Heart left ventricle (tissue), 16 donors: ENCODE measurements at regions of chr6 and their contacts with region 1.

Region 1: GRCh38 chr6:44475779-44476434 is 88.4 kb downstream of the CDC5L start:
- DNase-seq: peak; percentile 72 to 89 (median 78)
- ATAC-seq: peak; percentile 73 to 88 (median 86)
- H3K4me3 ChIP-seq: peak overlapping the region in 2 of 12 donors; percentile 17 to 19
- H3K27ac ChIP-seq: peak overlapping the region in 1 of 12 donors; percentile 38
- H3K4me1 ChIP-seq: peaks cover 0 to 23% (median 9%) of the 10 kb centered on the region in 12 donors
- H3K27me3 ChIP-seq: no peaks in the 10 kb centered on the region
- CTCF ChIP-seq: peak; percentile 86 to 96 (median 93)
- POLR2A ChIP-seq: no peak

Region 2: DNA sequence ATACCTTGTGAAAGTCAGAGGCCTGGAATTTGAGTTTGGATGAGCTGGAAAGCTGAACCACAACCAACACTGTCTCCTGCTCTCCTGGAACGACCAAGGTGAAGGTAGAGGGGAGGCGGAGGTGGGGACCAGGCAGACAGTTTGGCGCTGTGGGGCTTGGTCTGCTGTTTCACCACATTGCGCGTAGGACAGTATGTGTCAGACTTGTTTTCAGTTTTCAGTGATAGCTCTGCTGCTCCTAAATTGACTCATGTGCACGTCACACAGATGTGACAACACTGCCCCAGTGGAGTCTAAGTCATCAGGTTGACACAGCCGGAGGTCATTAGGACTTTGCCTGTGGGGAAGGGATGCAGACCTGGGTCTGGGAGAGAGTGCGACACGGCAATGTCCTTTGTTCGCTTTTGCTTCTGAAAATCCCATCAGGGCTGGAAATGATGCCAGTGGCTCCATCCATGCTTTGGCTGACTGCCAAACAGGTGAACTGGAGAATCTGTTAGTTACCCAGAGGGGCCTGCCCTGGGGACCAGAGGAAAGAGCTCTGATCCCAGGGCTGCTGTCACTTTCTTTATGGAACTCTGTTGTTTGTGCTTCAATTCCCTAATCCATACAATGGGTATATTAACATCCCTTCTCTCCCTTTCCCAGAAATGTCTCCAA is 167.1 kb after region 1 on chr6:
- intact Hi-C with region 1: loop called in 8 of 10 experiments (anchors 5 to 10 kb)
- DNase-seq: no peak
- ATAC-seq: no peak
- H3K4me3 ChIP-seq: no peak overlapping the region
- H3K27ac ChIP-seq: no peak overlapping the region
- H3K4me1 ChIP-seq: no peaks in the 10 kb centered on the region
- H3K27me3 ChIP-seq: peaks cover 0 to 9% (median 0%) of the 10 kb centered on the region in 9 donors
- CTCF ChIP-seq: no peak
- POLR2A ChIP-seq: no peak

Region 3: GRCh38 chr6:45421709-45422502 is 946.0 kb after region 1 on chr6:
- intact Hi-C with region 1: loop called in 1 of 10 experiments (anchors 5 kb)
- DNase-seq: peak; percentile 50 to 81 (median 65)
- ATAC-seq: peak; percentile 39 to 77 (median 56)
- H3K4me3 ChIP-seq: peak overlapping the region; percentile 41 to 81 (median 70)
- H3K27ac ChIP-seq: peak overlapping the region in 7 of 12 donors; percentile 37 to 82 (median 54)
- H3K4me1 ChIP-seq: peaks cover 2 to 48% (median 21%) of the 10 kb centered on the region in 12 donors
- H3K27me3 ChIP-seq: peaks cover 2 to 55% (median 23%) of the 10 kb centered on the region in 9 donors
- CTCF ChIP-seq: peak in 6 of 12 donors; percentile 4 to 42 (median 19)
- POLR2A ChIP-seq: no peak

Region 4: DNA sequence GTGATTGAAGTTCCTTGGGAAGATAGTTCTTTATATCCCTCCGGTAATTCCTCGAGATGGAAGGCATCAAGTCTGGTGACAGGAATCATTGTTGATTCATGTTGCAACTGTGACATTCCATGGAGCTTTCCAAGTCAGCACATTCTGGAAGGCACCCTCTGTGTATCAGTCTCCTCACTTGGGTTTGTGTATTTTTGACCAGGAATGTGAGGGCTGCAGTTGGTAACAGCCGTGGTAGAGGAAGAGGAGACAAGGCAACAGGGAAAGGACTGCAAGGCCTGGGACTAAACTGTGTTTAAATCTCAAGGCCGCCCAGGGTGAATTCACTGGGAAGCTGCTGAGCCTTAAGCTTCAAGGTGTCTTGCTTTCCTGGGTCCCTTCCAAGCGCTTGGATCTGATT is 1440.8 kb after region 1 on chr6:
- intact Hi-C with region 1: loop called in 5 of 10 experiments (anchors 5 to 10 kb)
- DNase-seq: no peak
- ATAC-seq: peak; percentile 47 to 68 (median 60)
- H3K4me3 ChIP-seq: no peak overlapping the region
- H3K27ac ChIP-seq: peak overlapping the region in 9 of 12 donors; percentile 28 to 67 (median 33)
- H3K4me1 ChIP-seq: peaks cover 0 to 36% (median 7%) of the 10 kb centered on the region in 12 donors
- H3K27me3 ChIP-seq: no peaks in the 10 kb centered on the region
- CTCF ChIP-seq: no peak
- POLR2A ChIP-seq: no peak